ENCODE measurements at regions of chr19 and their contacts with region 1.

Region 1: GRCh38 chr19:7562646-7563393 is 27.3 kb downstream of the PNPLA6 start:
- DNase-seq: peak; percentile 26

Region 2: DNA sequence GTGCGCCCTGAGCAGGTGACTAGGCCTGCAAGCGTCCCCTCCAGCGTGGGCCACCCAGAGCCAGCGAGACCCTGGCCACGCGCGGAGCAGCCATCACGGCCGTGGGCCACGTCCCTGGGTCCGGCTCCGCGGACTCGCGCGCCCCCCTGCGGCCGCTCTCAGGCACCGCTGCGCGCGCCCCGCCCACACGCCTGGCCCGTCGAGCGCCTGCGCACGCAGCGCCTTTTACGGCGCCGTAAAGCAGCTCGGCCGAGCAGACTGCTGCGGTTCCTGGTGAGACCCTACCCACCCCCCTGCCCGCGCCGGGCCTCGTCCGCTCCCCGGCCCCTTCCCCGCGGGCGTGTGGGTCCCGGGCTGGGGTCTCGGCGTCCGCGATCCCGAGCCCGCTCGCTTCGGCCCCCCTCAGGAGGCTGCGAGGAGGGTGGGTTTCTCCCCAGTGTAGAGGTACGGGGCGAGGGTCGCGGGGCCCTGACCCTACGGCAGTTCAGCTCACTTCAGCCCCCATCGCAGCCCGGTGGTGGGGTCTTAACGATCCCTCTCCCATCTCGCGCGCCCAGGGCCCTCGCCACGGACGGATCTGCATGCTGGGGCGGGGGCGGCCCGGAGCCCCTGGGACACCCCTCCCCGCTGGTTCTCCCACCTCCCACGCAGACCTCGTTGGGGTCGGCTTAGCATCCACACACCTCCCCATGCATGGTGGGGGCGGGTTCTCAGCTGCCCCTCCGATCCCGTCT is 118.0 kb after region 1 on chr19 and contains the start of gene TRAPPC5:
- CTCF ChIA-PET with region 1: interaction called, 10 read pairs
- POLR2A ChIA-PET with region 1: interaction called, 19 read pairs
- DNase-seq: peak; percentile 92

Region 3: GRCh38 chr19:7799640-7800355 is 237.0 kb after region 1 on chr19:
- CTCF ChIA-PET with region 1: interaction called, 23 read pairs
- POLR2A ChIA-PET with region 1: interaction called, 4 read pairs
- DNase-seq: peak; percentile 54

Measured in HEK293T (cell line).